Ascending aorta (tissue), 2 donors: ENCODE measurements at regions of chr13 and their contacts with region 1.

Region 1: GRCh38 chr13:100244431-100244830 is 155.5 kb downstream of the PCCA start:
- DNase-seq: no peak
- H3K4me3 ChIP-seq: no peak overlapping the region
- H3K27ac ChIP-seq: no peak overlapping the region
- H3K4me1 ChIP-seq: no peaks in the 10 kb centered on the region
- H3K27me3 ChIP-seq: no peaks in the 10 kb centered on the region
- CTCF ChIP-seq: no peak

Region 2: DNA sequence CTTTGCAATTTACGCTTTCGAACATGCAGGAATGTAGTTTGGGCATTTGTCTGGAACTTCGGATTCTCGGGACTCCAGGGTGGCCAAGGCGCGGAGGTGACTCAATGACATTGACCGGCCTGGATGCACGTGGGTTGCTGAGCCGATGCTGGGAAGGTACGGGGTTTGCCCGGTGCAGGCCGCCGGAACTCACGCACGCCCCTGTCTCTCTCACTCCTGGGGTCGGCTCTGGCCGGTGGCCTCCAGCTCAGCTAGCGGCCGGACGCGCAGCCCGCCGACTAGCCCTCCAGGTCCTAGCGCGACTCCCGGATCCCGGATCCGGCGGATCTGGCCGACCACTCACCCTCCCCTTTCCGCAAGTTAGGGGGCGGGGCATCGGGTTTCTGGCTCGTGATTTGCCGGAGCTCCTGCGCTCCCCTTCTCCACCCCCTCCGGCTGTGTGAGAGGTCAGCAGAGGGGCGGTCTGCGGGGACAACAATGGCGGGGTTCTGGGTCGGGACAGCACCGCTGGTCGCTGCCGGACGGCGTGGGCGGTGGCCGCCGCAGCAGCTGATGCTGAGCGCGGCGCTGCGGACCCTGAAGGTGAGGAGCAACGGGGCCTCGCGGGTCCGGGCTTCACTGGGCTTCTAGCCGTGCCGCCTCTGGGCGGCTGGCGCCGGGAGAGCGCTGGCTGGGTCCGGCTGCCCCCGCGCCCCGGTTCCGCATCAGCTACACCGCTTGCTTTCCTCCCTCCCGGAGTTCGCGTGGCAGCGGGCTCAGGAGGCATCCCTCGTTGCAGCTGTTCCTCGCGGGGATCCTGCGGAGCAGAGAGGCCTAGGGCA is 155.6 kb before region 1 on chr13 and contains the start of gene PCCA:
- intact Hi-C with region 1: loop called (anchors 10 kb)
- DNase-seq: peak; percentile 77 to 96
- H3K4me3 ChIP-seq: peak within 1 kb of the TSS; percentile 87 to 96
- H3K27ac ChIP-seq: peak within 1 kb of the TSS; percentile 75 to 80
- H3K4me1 ChIP-seq: peaks cover 0 to 8% of the 10 kb centered on the region in 2 donors
- H3K27me3 ChIP-seq: no peaks in the 10 kb centered on the region
- CTCF ChIP-seq: no peak
- total RNA-seq, gene PCCA: 3.6 TPM